CD4-positive, alpha-beta T cell (primary cell): ENCODE measurements at regions of chr16 and their contacts with region 1.

Region 1: GRCh38 chr16:57013229-57013628 is 23.9 kb downstream of the NLRC5 start:
- DNase-seq: peak in 2 of 14 experiments; percentile 9 to 34
- ATAC-seq: no peak
- H3K4me3 ChIP-seq: no peak overlapping the region
- H3K4me3 Mint-ChIP-seq: peak overlapping the region; percentile 71
- H3K27ac ChIP-seq: peak overlapping the region; percentile 43 to 86
- H3K27ac Mint-ChIP-seq: peak overlapping the region; percentile 91
- H3K4me1 ChIP-seq: peaks cover 78% of the 10 kb centered on the region
- H3K4me1 Mint-ChIP-seq: peaks cover 78% of the 10 kb centered on the region
- H3K27me3 ChIP-seq: no peaks in the 10 kb centered on the region
- H3K27me3 Mint-ChIP-seq: no peaks in the 10 kb centered on the region
- CTCF ChIP-seq: no peak

Region 2: DNA sequence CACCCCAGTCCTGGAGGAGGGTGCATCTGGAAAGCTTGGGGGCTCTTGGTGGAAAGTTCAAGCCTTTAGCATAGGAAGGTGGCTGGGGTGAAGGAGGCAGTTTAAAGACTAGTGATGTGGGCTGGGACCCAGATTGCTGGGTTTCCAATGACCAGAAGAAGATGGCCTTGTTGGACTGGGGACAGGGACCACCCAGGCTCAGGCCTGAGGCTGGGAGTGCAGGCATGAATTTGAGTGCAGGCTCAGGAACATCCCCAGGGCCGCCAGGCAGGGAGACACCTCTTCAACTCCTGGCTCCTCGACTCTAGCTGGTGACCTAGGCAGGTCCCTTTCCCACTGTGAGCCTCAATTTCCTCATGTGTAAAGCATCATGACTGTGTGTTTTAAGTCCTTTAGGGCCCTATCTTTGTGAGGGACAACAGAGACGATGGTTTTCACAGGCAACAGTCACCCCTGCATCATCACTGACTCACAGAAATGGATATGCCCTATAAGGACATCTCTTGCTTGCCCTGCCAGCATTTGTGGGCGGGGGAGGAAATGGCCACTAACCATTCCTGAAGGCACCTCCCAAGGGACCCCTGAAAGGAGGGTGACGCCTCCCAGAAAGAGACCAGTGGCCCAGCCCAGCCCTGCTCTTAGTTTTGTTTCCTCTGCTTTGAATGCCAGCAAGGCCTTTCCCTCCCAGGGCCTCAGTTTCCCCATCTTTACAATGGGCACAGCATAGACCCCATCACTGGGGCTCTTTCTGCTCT is 12.8 kb before region 1 on chr16:
- CTCF ChIA-PET with region 1: interaction called, 4 read pairs
- POLR2A ChIA-PET with region 1: interaction called, 10 read pairs
- intact Hi-C with region 1: loop called in 1 of 2 experiments (anchors 2 kb)
- DNase-seq: peak in 5 of 14 experiments; percentile 30 to 61 (median 45)
- ATAC-seq: peak; percentile 54
- H3K4me3 ChIP-seq: peak overlapping the region; percentile 32
- H3K4me3 Mint-ChIP-seq: peak overlapping the region; percentile 27
- H3K27ac ChIP-seq: peak overlapping the region; percentile 69 to 88
- H3K27ac Mint-ChIP-seq: peak overlapping the region; percentile 96
- H3K4me1 ChIP-seq: peaks cover 89% of the 10 kb centered on the region
- H3K4me1 Mint-ChIP-seq: peaks cover 96% of the 10 kb centered on the region
- H3K27me3 ChIP-seq: no peaks in the 10 kb centered on the region
- H3K27me3 Mint-ChIP-seq: no peaks in the 10 kb centered on the region
- CTCF ChIP-seq: no peak

Region 3: GRCh38 chr16:57023541-57024249 is 10.5 kb after region 1 on chr16:
- CTCF ChIA-PET with region 1: interaction called, 7 read pairs
- POLR2A ChIA-PET with region 1: interaction called, 27 read pairs
- intact Hi-C with region 1: loop called in 1 of 2 experiments (anchors 1 kb)
- DNase-seq: peak; percentile 44 to 93 (median 68)
- ATAC-seq: peak; percentile 89
- H3K4me3 ChIP-seq: peak overlapping the region; percentile 17
- H3K4me3 Mint-ChIP-seq: peak overlapping the region; percentile 27
- H3K27ac ChIP-seq: peak overlapping the region; percentile 23 to 69
- H3K27ac Mint-ChIP-seq: peak overlapping the region; percentile 84
- H3K4me1 ChIP-seq: peaks cover 93% of the 10 kb centered on the region
- H3K4me1 Mint-ChIP-seq: peaks cover 92% of the 10 kb centered on the region
- H3K27me3 ChIP-seq: no peaks in the 10 kb centered on the region
- H3K27me3 Mint-ChIP-seq: no peaks in the 10 kb centered on the region
- CTCF ChIP-seq: no peak

Region 4: DNA sequence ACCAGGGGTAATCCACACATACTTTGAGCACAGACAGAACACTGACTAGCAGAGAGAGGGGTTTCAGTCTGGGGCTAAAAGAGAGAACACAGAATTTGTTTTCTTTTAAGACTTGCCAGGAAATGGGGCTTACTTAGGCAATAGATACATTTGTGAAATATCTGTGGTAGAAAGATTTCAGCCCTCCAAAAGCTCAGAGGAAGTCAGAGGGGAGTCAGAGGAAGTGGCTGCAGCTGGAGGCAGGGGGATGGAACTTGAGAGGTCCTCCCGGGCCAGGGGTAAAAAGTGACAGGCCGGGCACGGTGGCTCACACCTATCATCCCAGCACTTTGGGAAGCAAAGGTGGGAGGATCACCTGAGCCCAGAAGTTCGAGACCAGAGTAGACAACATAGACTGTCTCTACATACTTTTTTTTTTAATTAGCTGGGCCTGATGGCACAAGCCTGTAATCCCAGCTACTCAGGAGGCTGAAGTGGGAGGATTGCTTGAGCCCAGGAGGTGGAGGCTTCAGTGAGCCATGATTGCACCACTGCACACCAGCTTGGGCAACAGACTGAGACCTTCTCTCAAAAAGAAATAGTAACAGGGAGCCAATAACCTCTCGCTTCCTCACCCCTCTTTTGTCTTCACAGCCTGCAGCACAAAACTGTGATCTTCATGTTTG is 26.1 kb after region 1 on chr16:
- CTCF ChIA-PET with region 1: interaction called, 5 read pairs
- POLR2A ChIA-PET with region 1: interaction called, 14 read pairs
- intact Hi-C with region 1: loop called (anchors 1 kb)
- DNase-seq: peak in 5 of 14 experiments; percentile 11 to 68 (median 41)
- ATAC-seq: peak; percentile 7
- H3K4me3 ChIP-seq: no peak overlapping the region
- H3K4me3 Mint-ChIP-seq: peak overlapping the region; percentile 79
- H3K27ac ChIP-seq: peak overlapping the region; percentile 81 to 88
- H3K27ac Mint-ChIP-seq: peak overlapping the region; percentile 94
- H3K4me1 ChIP-seq: peaks cover 98% of the 10 kb centered on the region
- H3K4me1 Mint-ChIP-seq: peaks cover 91% of the 10 kb centered on the region
- H3K27me3 ChIP-seq: no peaks in the 10 kb centered on the region
- H3K27me3 Mint-ChIP-seq: no peaks in the 10 kb centered on the region
- CTCF ChIP-seq: no peak

Region 5: DNA sequence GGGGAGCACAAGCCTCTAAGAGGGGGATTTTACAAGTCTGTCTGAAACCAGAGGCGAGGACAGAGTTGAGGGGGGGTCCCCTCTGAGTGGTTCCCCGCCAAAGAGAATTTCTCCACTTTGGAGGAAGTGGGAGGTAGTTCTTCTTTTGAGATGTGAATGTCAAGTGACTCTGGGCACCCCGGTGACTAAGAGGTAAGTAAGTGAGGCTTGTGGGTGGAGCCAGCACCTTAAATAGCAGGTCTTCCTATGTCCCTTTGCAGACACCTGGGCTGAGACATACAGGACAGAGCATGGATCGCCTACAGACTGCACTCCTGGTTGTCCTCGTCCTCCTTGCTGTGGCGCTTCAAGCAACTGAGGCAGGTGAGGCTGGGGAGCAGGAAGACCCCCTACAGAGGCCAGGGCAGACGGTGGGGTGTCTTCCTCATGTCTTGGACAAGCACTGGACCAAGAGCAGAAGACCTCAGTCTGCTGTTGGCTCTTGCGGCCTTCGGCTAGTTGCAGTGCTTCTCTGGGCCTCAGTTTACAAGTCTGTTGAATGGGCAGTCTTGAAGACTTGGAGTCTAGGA is 345.4 kb after region 1 on chr16 and contains the start of gene CCL22:
- CTCF ChIA-PET with region 1: no interaction called
- POLR2A ChIA-PET with region 1: no interaction called
- intact Hi-C with region 1: no loop called
- DNase-seq: peak in 2 of 14 experiments; percentile 39 to 50
- ATAC-seq: no peak
- H3K4me3 ChIP-seq: no peak within 1 kb of the TSS
- H3K4me3 Mint-ChIP-seq: no peak within 1 kb of the TSS
- H3K27ac ChIP-seq: no peak within 1 kb of the TSS
- H3K27ac Mint-ChIP-seq: no peak within 1 kb of the TSS
- H3K4me1 ChIP-seq: no peaks in the 10 kb centered on the region
- H3K4me1 Mint-ChIP-seq: no peaks in the 10 kb centered on the region
- H3K27me3 ChIP-seq: no peaks in the 10 kb centered on the region
- H3K27me3 Mint-ChIP-seq: no peaks in the 10 kb centered on the region
- CTCF ChIP-seq: no peak
- total RNA-seq, gene CCL22: not detected